Common myeloid progenitor, CD34-positive (primary cell): ENCODE measurements at regions of chr1 and their contacts with region 1.

Region 1: GRCh38 chr1:27044613-27045151 is 32.0 kb upstream of the TENT5B start:
- DNase-seq: peak; percentile 72 to 82 (median 78)
- H3K4me3 ChIP-seq: peak overlapping the region in 4 of 7 experiments; percentile 15 to 66 (median 55)
- H3K27ac ChIP-seq: no peak overlapping the region
- H3K4me1 ChIP-seq: peaks cover 0 to 18% (median 12%) of the 10 kb centered on the region in 4 experiments
- H3K27me3 ChIP-seq: no peaks in the 10 kb centered on the region

Region 2: DNA sequence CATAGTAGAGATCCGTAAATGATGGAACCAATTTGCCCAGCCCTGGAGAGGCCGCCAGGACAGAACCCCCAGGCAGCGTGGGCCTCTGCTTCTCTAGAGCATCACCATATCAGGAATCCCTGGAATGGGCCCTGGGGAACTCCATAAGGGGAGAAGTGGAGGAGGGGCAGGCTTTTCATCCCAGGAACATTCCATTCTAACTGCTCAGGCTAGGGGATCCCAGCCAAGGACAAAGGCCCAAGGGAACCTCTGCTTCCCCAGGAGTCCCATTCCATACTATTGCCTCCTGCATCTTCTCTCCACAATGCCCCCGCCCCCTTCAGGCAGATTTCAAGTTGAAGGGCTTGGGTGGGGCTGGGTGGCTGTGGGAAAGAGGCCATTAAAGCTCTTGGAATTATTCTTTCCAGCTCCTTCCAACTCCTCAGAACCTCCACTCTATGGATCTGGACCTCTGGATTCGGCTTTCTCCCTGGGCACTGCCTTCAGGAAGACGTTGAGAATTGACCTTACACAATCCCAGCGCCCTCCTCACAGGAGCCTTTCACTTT is 45.2 kb before region 1 on chr1:
- CTCF ChIA-PET with region 1: interaction called, 35 read pairs
- POLR2A ChIA-PET with region 1: no interaction called
- DNase-seq: no peak
- H3K4me3 ChIP-seq: no peak overlapping the region
- H3K27ac ChIP-seq: no peak overlapping the region
- H3K4me1 ChIP-seq: peaks cover 3 to 36% (median 23%) of the 10 kb centered on the region in 4 experiments
- H3K27me3 ChIP-seq: peaks cover 3 to 23% (median 13%) of the 10 kb centered on the region in 5 experiments

Region 3: DNA sequence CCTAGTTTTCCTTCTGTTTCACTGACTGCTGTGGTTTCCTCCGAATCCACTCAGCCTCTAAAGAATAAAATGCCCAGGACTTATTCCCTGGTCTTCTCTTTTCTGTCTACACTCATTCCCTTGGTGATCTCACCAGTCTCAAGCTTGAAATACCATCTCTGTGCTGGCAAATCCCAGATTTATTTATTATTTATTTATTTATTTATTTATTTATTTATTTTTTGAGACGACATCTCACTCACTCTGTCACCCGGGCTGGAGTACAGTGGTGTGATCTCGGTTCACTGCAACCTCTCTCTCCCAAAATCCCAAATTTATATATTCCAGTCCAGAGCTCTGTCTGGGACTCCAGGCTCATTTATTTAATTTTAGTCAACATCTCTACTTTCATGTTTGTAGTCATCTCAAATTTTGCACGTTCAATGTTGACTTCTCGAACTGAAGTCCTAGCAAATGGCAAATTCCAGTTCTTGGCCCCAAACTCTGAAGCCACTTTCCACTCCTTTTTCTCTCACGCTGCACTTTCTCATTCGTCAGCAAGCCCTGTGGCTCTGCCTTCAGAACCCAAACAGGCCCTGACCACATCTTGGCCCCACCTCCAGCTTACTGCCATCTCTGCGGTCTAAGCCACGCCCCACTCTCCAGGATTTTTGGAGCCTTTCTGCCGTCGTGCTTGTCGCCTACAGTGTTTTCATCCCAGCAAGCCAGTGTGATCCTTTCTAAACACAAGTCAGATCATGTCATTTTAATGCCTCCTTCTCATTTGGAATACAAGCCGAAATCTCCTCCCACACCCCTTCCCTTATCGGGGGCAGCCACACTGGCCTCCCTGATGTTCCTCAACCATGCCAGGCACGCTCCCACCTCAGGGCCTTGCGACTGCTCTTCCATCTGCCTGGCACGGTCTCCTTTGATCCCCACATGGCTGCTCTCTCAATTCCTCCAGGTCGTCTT is 17.8 kb before region 1 on chr1:
- CTCF ChIA-PET with region 1: interaction called, 20 read pairs
- POLR2A ChIA-PET with region 1: no interaction called
- DNase-seq: no peak
- H3K4me3 ChIP-seq: no peak overlapping the region
- H3K27ac ChIP-seq: peak overlapping the region in 1 of 2 experiments; percentile 74
- H3K4me1 ChIP-seq: peaks cover 0 to 19% (median 14%) of the 10 kb centered on the region in 4 experiments
- H3K27me3 ChIP-seq: no peaks in the 10 kb centered on the region

Region 4: GRCh38 chr1:27057801-27058625 is 13.3 kb after region 1 on chr1:
- CTCF ChIA-PET with region 1: interaction called, 35 read pairs
- POLR2A ChIA-PET with region 1: interaction called, 4 read pairs
- DNase-seq: no peak
- H3K4me3 ChIP-seq: no peak overlapping the region
- H3K27ac ChIP-seq: no peak overlapping the region
- H3K4me1 ChIP-seq: no peaks in the 10 kb centered on the region
- H3K27me3 ChIP-seq: peaks cover 0 to 3% (median 0%) of the 10 kb centered on the region in 5 experiments

Region 5: DNA sequence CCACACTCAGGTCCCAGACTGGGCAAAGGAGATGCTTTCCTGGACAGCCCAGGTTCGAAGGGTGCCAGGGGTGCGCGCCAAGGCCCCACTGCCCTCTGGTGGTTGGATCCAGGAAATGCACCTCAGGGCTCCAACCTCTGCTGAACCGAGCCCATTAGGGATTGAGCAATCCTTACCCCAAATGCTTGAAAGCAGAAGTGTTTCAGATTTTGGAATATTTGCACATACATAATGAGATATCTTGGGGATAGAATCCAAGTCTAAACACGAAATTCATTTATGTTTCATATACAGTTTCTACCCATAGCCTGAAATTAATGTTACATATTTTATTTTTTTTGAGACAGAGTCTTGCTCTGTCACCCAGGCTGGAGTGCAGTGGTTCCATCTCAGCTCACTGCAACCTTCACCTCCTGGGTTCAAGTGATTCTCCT is 52.8 kb after region 1 on chr1:
- CTCF ChIA-PET with region 1: interaction called, 449 read pairs
- POLR2A ChIA-PET with region 1: interaction called, 4 read pairs
- DNase-seq: peak; percentile 81 to 91 (median 88)
- H3K4me3 ChIP-seq: no peak overlapping the region
- H3K27ac ChIP-seq: no peak overlapping the region
- H3K4me1 ChIP-seq: peaks cover 0 to 26% (median 24%) of the 10 kb centered on the region in 4 experiments
- H3K27me3 ChIP-seq: no peaks in the 10 kb centered on the region